ENCODE measurements at regions of chr20 and their contacts with region 1.

Region 1: GRCh38 chr20:63009045-63009961 is 2.5 kb upstream of the BHLHE23 start:
- DNase-seq: peak; percentile 94

Region 2: DNA sequence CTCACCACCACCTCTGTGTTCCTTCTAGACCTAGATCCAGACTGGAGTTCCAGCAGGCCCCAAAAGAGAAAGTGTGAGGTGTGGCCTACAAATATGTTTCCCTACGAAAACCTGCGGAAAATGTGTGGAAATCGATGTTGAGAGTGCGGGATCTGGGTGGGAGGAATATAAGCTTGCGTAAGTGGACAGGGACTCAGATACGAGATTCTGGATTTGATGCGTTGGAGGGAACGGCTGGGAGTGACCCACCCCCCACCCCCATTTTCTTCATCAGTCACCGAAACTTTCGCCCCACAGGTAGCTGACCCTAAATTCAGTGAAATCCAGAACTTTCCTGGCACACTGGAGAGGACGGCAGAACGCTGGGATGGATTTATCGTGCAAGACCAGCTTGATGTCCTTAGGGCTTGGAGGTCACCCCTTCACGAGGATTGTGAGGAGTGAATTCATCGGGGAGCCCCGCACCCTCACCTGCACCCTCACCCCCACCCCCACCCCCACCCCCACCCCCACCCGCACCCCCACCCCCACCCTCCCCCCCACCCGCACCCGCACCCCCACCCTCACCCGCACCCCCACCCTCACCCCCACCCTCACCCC is 134.5 kb before region 1 on chr20:
- intact Hi-C with region 1: loop called (anchors 5 kb)
- DNase-seq: peak; percentile 13

Region 3: GRCh38 chr20:62899690-62900051 is 109.6 kb before region 1 on chr20:
- intact Hi-C with region 1: loop called in 1 of 2 experiments (anchors 10 kb)
- DNase-seq: peak; percentile 61

Region 4: DNA sequence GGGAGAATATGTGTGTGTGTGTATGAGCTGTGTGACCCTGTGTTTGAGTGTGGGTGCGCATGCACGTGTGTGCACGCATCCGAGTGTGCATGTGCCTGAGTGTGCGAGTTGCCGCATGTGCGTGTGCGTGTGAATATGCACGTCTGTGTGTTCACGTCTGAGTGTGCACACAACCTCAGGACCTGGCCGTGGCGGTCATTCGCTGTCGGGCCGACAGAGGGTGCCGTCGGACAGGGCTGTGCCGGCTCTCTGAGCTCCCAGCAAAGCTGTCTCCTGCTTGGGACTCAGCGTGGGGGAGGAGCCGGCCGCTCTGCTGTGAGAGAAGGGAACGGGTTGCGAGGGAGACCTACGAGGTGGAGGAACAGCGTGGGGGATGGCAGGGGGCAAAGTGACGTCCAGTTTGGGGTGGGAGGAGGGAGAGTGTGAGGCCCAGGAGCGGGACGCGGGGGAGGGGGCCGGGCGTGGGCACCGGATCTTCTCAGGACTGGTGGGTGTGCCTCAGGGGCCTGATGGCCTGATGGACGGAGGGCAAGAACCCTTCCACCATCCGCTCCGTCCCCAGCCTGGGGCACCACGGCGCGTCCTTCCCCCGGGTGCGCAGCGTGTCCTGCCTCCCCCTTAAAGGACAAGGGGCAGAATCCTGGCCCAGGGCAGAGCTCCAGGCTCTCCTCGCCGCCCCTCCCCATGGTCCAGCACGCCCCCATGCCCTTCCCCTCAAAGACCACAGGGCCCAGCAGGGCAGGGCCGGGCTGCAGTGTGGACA is 36.9 kb before region 1 on chr20:
- intact Hi-C with region 1: loop called in 1 of 2 experiments (anchors 2 kb)
- DNase-seq: peak; percentile 95

Region 5: GRCh38 chr20:63032861-63033634 is 23.7 kb after region 1 on chr20:
- intact Hi-C with region 1: no loop called
- DNase-seq: peak; percentile 62

Measured in posterior vena cava (tissue), 2 donors.